PC-9 (cell line): ENCODE measurements at regions of chr1 and their contacts with region 1.

Region 1: GRCh38 chr1:244435562-244436205 is 16.0 kb downstream of the ADSS2 start:
- DNase-seq: no peak
- H3K4me3 ChIP-seq: no peak overlapping the region
- H3K27ac ChIP-seq: peak overlapping the region; percentile 31; the same call in 1 of the 2 replicates
- H3K4me1 ChIP-seq: peaks cover 30% of the 10 kb centered on the region
- H3K27me3 ChIP-seq: no peaks in the 10 kb centered on the region
- CTCF ChIP-seq: no peak

Region 2: DNA sequence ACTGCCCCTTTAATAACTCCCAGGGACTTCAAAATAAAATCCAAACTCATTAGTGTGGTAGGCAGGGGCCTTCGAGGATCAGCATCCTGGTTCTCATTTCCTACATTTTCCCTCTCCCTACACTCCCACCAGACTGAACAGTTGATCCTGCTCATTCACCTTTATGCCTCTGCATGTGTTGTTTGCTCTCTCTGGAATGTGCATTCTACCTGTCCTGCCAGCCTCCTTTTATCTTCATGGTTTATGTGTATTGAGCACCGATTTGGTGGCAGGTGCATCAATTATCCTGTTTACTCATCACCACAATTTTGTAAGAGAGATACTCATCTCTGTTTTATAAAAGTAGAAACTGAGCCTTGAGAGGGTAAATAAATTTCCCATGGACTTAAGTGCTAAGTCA is 108.9 kb before region 1 on chr1:
- CTCF ChIA-PET with region 1: no interaction called
- POLR2A ChIA-PET with region 1: no interaction called
- intact Hi-C with region 1: no loop called
- DNase-seq: peak in 1 of 2 experiments; percentile 38
- H3K4me3 ChIP-seq: no peak overlapping the region
- H3K27ac ChIP-seq: no peak overlapping the region
- H3K4me1 ChIP-seq: peaks cover 47% of the 10 kb centered on the region
- H3K27me3 ChIP-seq: no peaks in the 10 kb centered on the region
- CTCF ChIP-seq: no peak

Region 3: GRCh38 chr1:244634546-244634945 is 198.9 kb after region 1 on chr1:
- CTCF ChIA-PET with region 1: no interaction called
- POLR2A ChIA-PET with region 1: interaction called, 31 read pairs
- intact Hi-C with region 1: no loop called
- DNase-seq: no peak
- H3K4me3 ChIP-seq: no peak overlapping the region
- H3K27ac ChIP-seq: no peak overlapping the region
- H3K4me1 ChIP-seq: no peaks in the 10 kb centered on the region
- H3K27me3 ChIP-seq: no peaks in the 10 kb centered on the region
- CTCF ChIP-seq: no peak